SK-N-SH (cell line): ENCODE measurements at regions of chr1 and their contacts with region 1.

Region 1: DNA sequence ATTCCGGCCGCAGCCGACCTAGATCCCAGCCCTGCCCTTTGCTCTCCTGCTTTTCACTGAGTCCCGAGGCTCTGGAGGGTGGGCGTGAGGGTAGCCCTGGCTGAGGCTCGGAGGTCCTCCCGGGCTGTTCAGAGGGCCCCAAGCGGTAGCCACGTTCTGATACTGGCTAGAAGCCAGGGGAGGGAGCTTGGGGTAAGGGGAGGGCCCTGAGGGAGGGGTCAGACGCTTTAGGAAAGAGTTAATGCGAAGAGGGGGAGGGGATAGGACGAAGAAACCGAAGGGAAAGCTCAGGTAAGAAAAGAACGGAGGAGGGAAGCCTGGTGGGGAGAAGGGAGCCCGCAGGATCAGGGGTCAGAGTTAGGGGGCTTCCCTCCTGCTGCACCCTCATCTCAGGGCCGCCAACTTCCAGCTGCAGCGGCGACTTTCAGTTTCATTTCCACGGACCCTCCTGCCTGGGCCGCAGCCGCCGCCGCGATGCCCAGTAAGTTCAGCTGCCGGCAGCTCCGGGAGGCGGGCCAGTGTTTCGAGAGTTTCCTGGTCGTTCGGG is at the start of gene MOV10:
- DNase-seq: peak; percentile 79
- H3K4me3 ChIP-seq: peak within 1 kb of the TSS; percentile 79 to 89
- H3K27ac ChIP-seq: peak within 1 kb of the TSS; percentile 75 to 94
- H3K4me1 ChIP-seq: peaks cover 11 to 12% of the 10 kb centered on the region in 2 experiments; a peak in 3 of 4 replicates
- H3K27me3 ChIP-seq: no peaks in the 10 kb centered on the region
- CTCF ChIP-seq: no peak
- EP300 ChIP-seq: no peak
- RAD21 ChIP-seq: no peak
- polyA plus RNA-seq, gene MOV10: 81.0 and 87.4 TPM in 2 replicates

Region 2: GRCh38 chr1:112619520-112620376 is 54.8 kb before region 1 on chr1 and contains the start of gene CAPZA1:
- CTCF ChIA-PET with region 1: interaction called, 22 read pairs
- POLR2A ChIA-PET with region 1: interaction called, 14 read pairs
- DNase-seq: peak; percentile 90
- H3K4me3 ChIP-seq: peak within 1 kb of the TSS; percentile 88 to 100
- H3K27ac ChIP-seq: peak within 1 kb of the TSS; percentile 94 to 99
- H3K4me1 ChIP-seq: peaks cover 12 to 18% of the 10 kb centered on the region in 2 experiments; a peak in 3 of 4 replicates
- H3K27me3 ChIP-seq: no peaks in the 10 kb centered on the region
- CTCF ChIP-seq: no peak
- EP300 ChIP-seq: no peak
- RAD21 ChIP-seq: no peak
- polyA plus RNA-seq, gene CAPZA1: 50.8 and 71.8 TPM in 2 replicates

Region 3: DNA sequence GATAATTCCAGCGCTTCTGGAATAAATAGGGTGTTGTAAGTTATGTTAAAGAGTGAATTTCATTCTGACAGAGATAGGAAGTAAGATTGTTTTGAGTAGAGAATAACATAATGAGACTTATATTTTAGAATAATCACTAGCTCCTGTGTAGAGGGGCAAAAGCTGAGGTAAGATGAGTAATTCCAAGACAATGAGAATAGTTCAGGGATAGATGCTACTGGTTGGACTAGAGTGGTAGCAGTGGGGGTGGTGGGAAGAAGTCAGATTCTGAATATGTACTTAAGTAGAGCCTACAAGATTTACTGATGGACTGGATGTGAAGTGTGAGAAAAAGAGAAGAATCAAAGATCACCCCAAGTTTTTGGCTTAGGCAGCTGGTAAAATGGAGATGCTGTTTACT is 23.3 kb before region 1 on chr1:
- CTCF ChIA-PET with region 1: interaction called, 11 read pairs
- POLR2A ChIA-PET with region 1: interaction called, 5 read pairs
- DNase-seq: no peak
- H3K4me3 ChIP-seq: no peak overlapping the region
- H3K27ac ChIP-seq: no peak overlapping the region
- H3K4me1 ChIP-seq: no peaks in the 10 kb centered on the region; a peak in 1 of 4 replicates
- H3K27me3 ChIP-seq: no peaks in the 10 kb centered on the region
- CTCF ChIP-seq: no peak
- EP300 ChIP-seq: no peak
- RAD21 ChIP-seq: no peak

Region 4: GRCh38 chr1:112660072-112660471 is 14.4 kb before region 1 on chr1:
- CTCF ChIA-PET with region 1: interaction called, 42 read pairs
- POLR2A ChIA-PET with region 1: interaction called, 6 read pairs
- DNase-seq: no peak
- H3K4me3 ChIP-seq: no peak overlapping the region
- H3K27ac ChIP-seq: no peak overlapping the region
- H3K4me1 ChIP-seq: no peaks in the 10 kb centered on the region
- H3K27me3 ChIP-seq: no peaks in the 10 kb centered on the region
- CTCF ChIP-seq: no peak
- EP300 ChIP-seq: no peak
- RAD21 ChIP-seq: no peak

Region 5: DNA sequence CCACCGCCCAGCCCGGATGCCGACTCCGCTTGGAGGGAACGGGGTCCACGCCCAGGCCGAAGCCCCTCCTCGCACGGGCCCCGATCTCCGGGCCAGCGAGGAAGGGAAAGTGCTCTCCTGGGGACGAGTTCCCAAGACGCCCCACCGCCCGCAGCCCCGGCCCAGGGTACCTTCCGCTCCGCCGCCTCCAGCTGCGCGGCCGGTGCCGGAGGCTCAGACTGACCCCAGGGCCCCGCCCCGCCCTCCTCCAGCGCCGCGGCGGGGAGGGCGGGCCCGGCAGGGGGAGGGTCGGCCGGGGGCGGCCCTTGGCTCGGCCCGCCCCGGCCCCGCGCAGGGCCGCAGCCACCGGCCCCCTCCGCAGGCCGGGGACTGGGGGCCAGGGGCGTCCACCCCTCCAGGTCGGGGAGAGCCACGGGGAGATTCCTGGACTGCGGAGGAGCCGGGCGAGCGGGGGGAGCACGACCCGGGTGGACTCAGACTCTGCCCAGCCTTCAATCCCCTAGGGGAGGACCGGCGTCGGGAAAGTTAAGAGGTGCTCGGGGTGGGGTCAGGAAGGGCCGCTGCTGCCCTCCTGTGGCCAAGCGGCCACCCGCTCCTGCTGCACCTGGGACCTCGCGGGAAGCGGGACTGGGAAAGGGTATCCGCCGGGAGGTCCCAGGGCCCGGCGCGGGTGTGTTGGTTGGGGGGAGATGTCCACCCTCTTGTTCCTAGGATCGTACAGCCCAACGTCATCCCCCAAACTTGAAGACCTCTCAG is 32.6 kb after region 1 on chr1 and contains the start of gene RHOC:
- CTCF ChIA-PET with region 1: interaction called, 16 read pairs
- POLR2A ChIA-PET with region 1: interaction called, 8 read pairs
- DNase-seq: peak; percentile 96
- H3K4me3 ChIP-seq: peak within 1 kb of the TSS; percentile 93 to 94
- H3K27ac ChIP-seq: peak within 1 kb of the TSS; percentile 77 to 87
- H3K4me1 ChIP-seq: peaks cover 10 to 37% of the 10 kb centered on the region in 2 experiments; a peak in 3 of 4 replicates
- H3K27me3 ChIP-seq: no peaks in the 10 kb centered on the region
- CTCF ChIP-seq: peak; percentile 84
- EP300 ChIP-seq: no peak
- RAD21 ChIP-seq: peak; percentile 80
- polyA plus RNA-seq, gene RHOC: 961 and 1,028 TPM in 2 replicates

Region 6: DNA sequence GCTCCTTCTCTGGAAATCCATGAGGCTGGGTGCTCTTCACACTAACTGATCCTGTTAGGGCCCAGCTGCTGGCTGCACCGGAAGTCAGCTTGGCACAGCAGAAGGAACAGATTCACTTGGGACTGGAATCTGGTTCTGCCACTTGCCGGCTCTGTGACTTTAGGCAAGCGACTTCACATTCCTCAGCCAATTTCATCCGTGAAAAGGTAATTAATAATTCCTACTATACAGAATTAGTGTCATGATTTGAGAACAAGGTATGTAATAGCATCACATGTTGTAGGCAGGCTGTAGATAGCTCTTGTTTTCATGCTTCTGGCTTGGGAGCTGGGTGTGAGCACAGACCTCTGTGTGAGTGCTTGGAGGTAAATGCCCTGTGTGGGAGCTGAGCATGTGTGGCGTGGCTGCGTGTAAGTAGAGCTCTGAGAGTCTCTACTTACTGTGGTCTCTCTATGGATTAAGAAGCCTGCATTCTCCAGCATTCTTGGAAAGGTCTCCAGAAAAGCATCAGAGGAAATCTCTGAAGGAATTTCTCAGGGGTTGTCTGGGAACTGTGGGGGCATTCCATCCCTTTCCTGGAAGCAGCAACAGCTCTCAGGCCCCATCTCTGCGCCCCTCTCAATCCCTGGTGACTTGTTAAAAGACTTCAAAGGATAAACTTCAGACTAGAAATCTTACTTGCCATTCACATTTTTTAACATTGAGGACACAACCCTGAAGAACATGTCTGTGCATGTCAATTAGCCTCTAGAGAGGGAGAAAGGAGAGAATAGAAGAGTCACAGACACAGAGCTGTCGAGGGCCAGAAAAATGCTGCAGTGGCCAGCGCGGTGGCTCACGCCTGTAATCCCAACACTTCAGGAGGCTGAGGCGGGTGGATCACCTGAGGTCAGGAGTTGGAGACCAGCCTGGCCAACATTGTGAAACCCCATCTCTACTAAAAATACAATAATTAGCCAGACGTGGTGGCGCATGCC is 88.3 kb after region 1 on chr1:
- CTCF ChIA-PET with region 1: no interaction called
- POLR2A ChIA-PET with region 1: no interaction called
- DNase-seq: no peak
- H3K4me3 ChIP-seq: no peak overlapping the region
- H3K27ac ChIP-seq: peak overlapping the region in 1 of 2 experiments; percentile 5; a peak in 1 of 4 replicates
- H3K4me1 ChIP-seq: peaks cover 8 to 15% of the 10 kb centered on the region in 2 experiments; a peak in 2 of 4 replicates
- H3K27me3 ChIP-seq: no peaks in the 10 kb centered on the region
- CTCF ChIP-seq: no peak
- EP300 ChIP-seq: no peak
- RAD21 ChIP-seq: no peak